ENCODE measurements at regions of chr6 and their contacts with region 1.

Region 1: DNA sequence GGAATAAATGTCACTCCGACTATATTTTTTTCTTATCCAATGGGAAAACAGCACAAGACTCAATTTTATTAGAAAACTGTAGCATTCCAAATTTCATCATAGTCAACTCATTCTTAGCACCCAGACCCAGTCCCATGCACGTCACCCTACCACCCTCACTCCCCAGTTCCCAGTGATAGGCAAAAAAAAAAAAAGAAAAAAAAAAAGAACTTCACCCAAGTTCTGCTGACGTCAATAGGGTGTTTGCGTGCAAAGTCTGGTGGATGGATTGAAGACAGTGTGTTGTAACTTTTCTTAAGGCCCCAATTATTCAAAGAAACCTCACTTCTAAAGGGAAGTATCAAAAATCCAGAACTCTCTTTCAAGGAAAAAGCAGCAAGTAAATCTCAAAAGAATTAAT is 213.9 kb upstream of the PRDM1 start:
- DNase-seq: no peak
- H3K4me3 ChIP-seq: no peak overlapping the region
- H3K4me3 Mint-ChIP-seq: no peak overlapping the region
- H3K27ac Mint-ChIP-seq: no peak overlapping the region
- H3K4me1 ChIP-seq: peaks cover 33% of the 10 kb centered on the region
- H3K4me1 Mint-ChIP-seq: peaks cover 27% of the 10 kb centered on the region
- H3K27me3 ChIP-seq: no peaks in the 10 kb centered on the region
- H3K27me3 Mint-ChIP-seq: no peaks in the 10 kb centered on the region
- CTCF ChIP-seq: no peak

Region 2: DNA sequence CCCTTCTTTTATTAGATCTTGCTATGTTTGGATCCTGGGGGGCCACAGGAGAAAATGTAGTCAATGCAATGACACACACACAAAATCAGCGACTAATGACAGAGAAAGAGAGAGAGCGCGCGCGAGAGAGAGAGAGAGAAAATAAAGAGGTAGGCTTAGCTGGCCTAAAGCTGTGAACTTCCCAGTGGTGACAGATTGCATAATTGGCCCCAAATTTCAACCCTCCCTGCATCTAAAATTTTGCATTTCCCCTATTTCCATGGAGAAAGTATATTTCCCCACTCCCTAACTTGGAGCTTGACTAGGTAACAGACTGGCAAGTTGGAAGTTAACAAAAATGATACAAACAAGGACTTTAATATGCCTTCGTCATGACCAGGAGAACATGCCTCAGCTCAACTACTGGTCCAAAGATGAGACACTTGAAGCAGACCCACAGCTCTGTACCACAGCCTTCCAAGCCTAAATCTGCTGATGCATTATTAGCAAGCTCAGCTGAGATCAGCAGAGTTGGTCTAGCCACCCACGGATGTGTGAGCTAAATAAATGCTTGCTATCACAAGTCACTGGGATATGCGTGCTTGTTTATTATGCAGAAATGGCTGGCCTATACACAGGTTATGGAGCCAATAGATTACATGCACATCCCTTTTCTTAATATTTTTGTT is 95.8 kb after region 1 on chr6:
- CTCF ChIA-PET with region 1: no interaction called
- POLR2A ChIA-PET with region 1: no interaction called
- intact Hi-C with region 1: loop called (anchors 2 kb)
- DNase-seq: no peak
- H3K4me3 ChIP-seq: no peak overlapping the region
- H3K4me3 Mint-ChIP-seq: no peak overlapping the region
- H3K27ac Mint-ChIP-seq: peak overlapping the region; percentile 16
- H3K4me1 ChIP-seq: peaks cover 22% of the 10 kb centered on the region
- H3K4me1 Mint-ChIP-seq: peaks cover 24% of the 10 kb centered on the region
- H3K27me3 ChIP-seq: no peaks in the 10 kb centered on the region
- H3K27me3 Mint-ChIP-seq: no peaks in the 10 kb centered on the region
- CTCF ChIP-seq: no peak

Region 3: DNA sequence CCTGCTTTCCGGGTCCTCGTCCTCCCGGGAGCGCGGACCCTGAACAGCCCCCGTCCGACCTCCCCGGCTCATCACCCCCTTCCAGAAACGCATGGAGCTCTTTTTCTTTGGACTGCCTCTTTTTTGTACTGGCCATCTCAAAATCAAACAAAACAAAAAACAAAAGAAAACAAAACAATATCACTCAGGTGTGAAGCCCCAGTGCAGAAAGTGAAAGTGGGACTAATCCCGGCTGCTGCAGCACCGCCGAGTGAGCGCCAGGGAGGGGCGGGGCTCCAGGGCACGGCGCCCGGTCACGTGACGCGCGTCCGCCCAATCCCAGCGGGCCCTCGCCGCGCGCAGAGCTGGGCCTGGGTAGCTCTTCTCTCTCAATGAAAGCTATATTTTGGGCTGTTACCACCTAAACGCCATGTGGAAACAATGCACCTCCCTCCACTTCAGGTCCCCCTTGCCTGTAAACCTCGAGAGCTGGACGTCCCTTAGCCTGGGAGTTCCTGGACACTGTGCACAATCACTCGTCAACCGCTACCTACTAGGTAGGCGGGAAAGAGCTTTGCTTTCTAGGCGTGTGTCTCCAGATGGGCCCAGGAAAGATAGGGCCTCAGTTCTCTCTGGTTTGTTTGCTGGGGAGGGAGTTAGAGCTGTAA is 120.2 kb after region 1 on chr6:
- CTCF ChIA-PET with region 1: no interaction called
- POLR2A ChIA-PET with region 1: no interaction called
- intact Hi-C with region 1: loop called (anchors 5 kb)
- DNase-seq: peak; percentile 75 to 88
- H3K4me3 ChIP-seq: peak overlapping the region; percentile 51
- H3K4me3 Mint-ChIP-seq: peak overlapping the region; percentile 73
- H3K27ac Mint-ChIP-seq: peak overlapping the region; percentile 73
- H3K4me1 ChIP-seq: peaks cover 16% of the 10 kb centered on the region; the same call in 1 of the 2 replicates
- H3K4me1 Mint-ChIP-seq: peaks cover 33% of the 10 kb centered on the region
- H3K27me3 ChIP-seq: no peaks in the 10 kb centered on the region
- H3K27me3 Mint-ChIP-seq: no peaks in the 10 kb centered on the region
- CTCF ChIP-seq: no peak